Caco-2 (cell line): ENCODE measurements at regions of chr9 and their contacts with region 1.

Region 1: DNA sequence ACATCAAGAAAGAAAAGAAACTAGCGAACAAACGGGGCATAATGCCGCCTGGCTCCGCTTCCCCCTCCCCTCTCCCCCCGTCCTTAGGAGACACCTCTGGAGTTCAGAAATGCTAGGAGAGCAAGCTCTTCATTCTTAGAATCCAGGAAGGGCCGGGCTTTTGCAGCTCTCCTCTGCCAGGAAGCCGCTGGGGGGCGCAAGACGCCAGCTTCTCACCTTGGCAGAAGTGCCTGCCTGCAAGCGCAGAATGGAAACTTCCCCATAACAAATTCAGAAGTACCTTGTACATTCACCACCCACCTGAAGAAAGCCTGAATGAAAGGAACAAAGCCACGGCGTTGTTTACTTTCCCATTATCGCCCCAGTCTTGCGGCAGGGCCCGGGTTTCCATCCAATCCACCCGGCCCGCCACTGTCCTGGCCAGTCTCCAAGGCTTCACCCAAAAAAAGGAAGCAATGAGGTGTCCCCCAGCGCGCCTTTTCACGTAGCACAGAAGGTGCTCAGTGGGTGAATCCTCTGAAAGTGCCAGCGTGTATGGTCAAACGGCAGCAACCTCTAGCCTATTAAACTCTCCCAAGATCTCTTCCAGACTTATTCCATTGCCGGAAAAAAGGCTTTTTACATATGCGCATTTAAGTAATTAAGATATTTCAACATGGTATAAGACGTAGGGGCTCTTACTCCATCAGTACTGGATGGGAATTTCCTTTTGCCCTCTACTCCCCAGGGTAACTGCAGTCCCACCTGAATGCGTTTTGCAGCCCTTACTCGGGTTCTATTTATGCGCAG is 1.6 kb upstream of the GADD45G start:
- DNase-seq: peak; percentile 84 to 89
- H3K4me3 ChIP-seq: peak overlapping the region; percentile 41
- H3K4me3 Mint-ChIP-seq: peak overlapping the region; percentile 89
- H3K27ac Mint-ChIP-seq: no peak overlapping the region
- H3K4me1 ChIP-seq: peaks cover 9% of the 10 kb centered on the region; the same call in 1 of the 2 replicates
- H3K4me1 Mint-ChIP-seq: peaks cover 6% of the 10 kb centered on the region
- H3K27me3 ChIP-seq: no peaks in the 10 kb centered on the region
- H3K27me3 Mint-ChIP-seq: no peaks in the 10 kb centered on the region
- CTCF ChIP-seq: peak; percentile 68 to 78

Region 2: DNA sequence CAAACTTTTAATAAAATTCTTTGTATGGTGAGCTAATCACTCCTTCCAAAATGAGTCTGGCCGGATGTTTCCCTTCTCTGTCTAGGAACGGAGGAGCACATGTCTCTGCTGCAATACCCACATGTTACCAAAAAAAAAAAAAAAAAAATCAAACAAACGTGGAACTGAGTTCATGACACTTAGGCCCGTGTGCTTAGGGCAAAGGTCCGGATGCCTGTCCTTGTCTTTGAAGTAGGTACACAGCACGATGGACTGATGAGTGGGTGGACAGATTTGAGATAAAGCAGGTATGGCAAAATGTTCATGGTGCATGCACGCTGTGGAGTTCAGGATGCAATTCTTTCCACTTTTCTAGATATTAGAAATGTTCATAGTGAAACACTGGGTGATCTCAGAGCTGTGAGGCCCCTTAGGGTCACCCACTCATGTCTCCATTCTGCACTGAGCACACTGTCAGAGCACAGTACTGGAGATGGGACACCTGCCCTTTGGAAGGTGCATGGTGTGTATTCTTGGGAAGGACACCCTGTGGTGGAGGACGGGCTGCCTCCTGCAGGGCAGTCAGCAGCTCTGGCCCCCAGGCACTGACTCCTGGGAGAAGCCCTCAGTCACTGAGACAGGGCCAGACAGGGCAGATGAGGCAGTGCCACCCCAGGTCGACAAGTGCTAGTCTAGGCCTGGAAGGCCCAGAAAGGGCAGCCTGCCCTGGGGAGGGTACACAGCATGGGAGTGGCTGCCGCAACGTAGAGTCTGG is 45.3 kb after region 1 on chr9:
- CTCF ChIA-PET with region 1: interaction called, 4 read pairs
- POLR2A ChIA-PET with region 1: interaction called, 7 read pairs
- intact Hi-C with region 1: loop called (anchors 1 kb)
- DNase-seq: peak; percentile 67 to 81
- H3K4me3 ChIP-seq: no peak overlapping the region
- H3K4me3 Mint-ChIP-seq: peak overlapping the region; percentile 43
- H3K27ac Mint-ChIP-seq: peak overlapping the region; percentile 77
- H3K4me1 ChIP-seq: peaks cover 35% of the 10 kb centered on the region
- H3K4me1 Mint-ChIP-seq: peaks cover 7% of the 10 kb centered on the region
- H3K27me3 ChIP-seq: no peaks in the 10 kb centered on the region
- H3K27me3 Mint-ChIP-seq: no peaks in the 10 kb centered on the region
- CTCF ChIP-seq: no peak

Region 3: DNA sequence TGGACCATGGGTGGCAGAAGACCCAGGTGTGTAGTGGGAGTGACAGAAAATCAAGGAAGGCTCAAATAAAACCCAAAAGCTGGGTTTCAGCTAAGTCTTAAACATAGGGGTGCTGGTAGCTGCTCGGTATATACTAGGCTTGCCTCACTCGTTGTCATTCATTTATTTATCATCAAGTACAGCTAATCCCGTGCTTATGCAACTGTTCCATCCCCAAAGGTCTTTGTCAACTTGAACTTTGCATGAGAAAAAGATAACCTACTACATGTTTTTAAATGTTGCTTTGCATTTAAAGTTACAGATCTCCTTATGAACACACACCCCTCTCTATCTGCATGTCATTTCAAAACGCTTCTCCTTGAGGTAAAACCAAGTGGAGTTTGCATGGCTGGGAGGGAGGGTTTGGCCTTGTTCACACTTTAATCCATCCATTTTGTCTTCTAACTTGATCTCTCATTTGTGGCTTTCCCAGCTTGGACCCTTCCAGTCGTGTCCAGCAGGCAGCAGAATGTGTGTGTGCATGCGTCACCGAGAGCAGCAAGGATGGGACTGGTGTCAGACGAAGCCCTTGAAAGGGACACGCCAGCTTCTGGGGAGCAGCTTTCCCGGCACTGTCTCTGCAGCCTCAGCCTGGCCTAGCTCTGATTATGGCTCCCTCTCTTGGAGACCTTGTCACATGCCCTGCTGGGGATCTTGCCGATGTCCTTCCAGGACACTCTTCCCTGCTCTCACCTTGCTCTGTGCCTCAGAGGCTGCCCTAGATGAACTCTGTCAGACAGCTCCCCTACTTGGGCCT is 135.2 kb after region 1 on chr9:
- CTCF ChIA-PET with region 1: interaction called, 20 read pairs
- POLR2A ChIA-PET with region 1: no interaction called
- intact Hi-C with region 1: loop called (anchors 1 kb)
- DNase-seq: no peak
- H3K4me3 ChIP-seq: no peak overlapping the region
- H3K4me3 Mint-ChIP-seq: no peak overlapping the region
- H3K27ac Mint-ChIP-seq: no peak overlapping the region
- H3K4me1 ChIP-seq: no peaks in the 10 kb centered on the region
- H3K4me1 Mint-ChIP-seq: no peaks in the 10 kb centered on the region
- H3K27me3 ChIP-seq: no peaks in the 10 kb centered on the region
- H3K27me3 Mint-ChIP-seq: no peaks in the 10 kb centered on the region
- CTCF ChIP-seq: peak in 1 of 2 experiments; percentile 26

Region 4: GRCh38 chr9:89923961-89924504 is 320.9 kb after region 1 on chr9:
- CTCF ChIA-PET with region 1: interaction called, 7 read pairs
- POLR2A ChIA-PET with region 1: no interaction called
- intact Hi-C with region 1: loop called (anchors 1 kb)
- DNase-seq: peak; percentile 71 to 80
- H3K4me3 ChIP-seq: no peak overlapping the region
- H3K4me3 Mint-ChIP-seq: peak overlapping the region; percentile 67
- H3K27ac Mint-ChIP-seq: peak overlapping the region; percentile 84
- H3K4me1 ChIP-seq: peaks cover 34% of the 10 kb centered on the region
- H3K4me1 Mint-ChIP-seq: peaks cover 53% of the 10 kb centered on the region
- H3K27me3 ChIP-seq: no peaks in the 10 kb centered on the region
- H3K27me3 Mint-ChIP-seq: no peaks in the 10 kb centered on the region
- CTCF ChIP-seq: no peak

Region 5: GRCh38 chr9:90102292-90102901 is 499.2 kb after region 1 on chr9:
- CTCF ChIA-PET with region 1: interaction called, 55 read pairs
- POLR2A ChIA-PET with region 1: no interaction called
- intact Hi-C with region 1: loop called (anchors 1 kb)
- DNase-seq: peak; percentile 73 to 81
- H3K4me3 ChIP-seq: no peak overlapping the region
- H3K4me3 Mint-ChIP-seq: no peak overlapping the region
- H3K27ac Mint-ChIP-seq: no peak overlapping the region
- H3K4me1 ChIP-seq: no peaks in the 10 kb centered on the region
- H3K4me1 Mint-ChIP-seq: no peaks in the 10 kb centered on the region
- H3K27me3 ChIP-seq: no peaks in the 10 kb centered on the region
- H3K27me3 Mint-ChIP-seq: no peaks in the 10 kb centered on the region
- CTCF ChIP-seq: peak; percentile 61 to 68